Activated naive CD4-positive, alpha-beta T cell treated with anti-CD3 and anti-CD28 coated beads for 36 hours (primary cell): ENCODE measurements at regions of chr21 and their contacts with region 1.

Region 1: GRCh38 chr21:14454016-14455009 is 71.4 kb upstream of the HSPA13 start:
- DNase-seq: no peak
- H3K4me3 Mint-ChIP-seq: no peak overlapping the region
- H3K27ac Mint-ChIP-seq: peak overlapping the region; percentile 88
- H3K4me1 Mint-ChIP-seq: peaks cover 48% of the 10 kb centered on the region
- H3K27me3 Mint-ChIP-seq: peaks cover 2% of the 10 kb centered on the region

Region 2: DNA sequence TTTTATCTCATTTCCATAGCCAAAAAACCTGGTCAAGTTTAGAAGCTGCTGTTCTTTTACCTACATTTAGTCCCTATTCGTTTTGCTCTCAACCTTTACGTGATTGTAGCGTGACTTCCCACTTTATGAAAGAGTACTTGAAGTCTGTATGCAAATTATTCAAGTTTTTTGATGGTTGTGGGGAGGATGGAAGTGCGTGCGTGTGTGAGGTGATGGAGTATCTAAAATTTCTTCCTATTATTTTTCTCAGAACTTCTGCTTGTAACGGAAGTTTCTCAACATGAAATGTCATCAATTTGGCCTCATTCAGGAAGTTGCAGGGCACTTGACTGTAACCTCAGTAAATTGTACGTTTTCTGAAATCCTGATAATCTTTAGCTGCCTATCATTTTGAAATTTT is 27.9 kb after region 1 on chr21:
- CTCF ChIA-PET with region 1: interaction called, 4 read pairs
- intact Hi-C with region 1: loop called (anchors 1 kb)
- DNase-seq: peak; percentile 55
- H3K4me3 Mint-ChIP-seq: peak overlapping the region; percentile 1
- H3K27ac Mint-ChIP-seq: peak overlapping the region; percentile 90
- H3K4me1 Mint-ChIP-seq: peaks cover 61% of the 10 kb centered on the region
- H3K27me3 Mint-ChIP-seq: no peaks in the 10 kb centered on the region

Region 3: DNA sequence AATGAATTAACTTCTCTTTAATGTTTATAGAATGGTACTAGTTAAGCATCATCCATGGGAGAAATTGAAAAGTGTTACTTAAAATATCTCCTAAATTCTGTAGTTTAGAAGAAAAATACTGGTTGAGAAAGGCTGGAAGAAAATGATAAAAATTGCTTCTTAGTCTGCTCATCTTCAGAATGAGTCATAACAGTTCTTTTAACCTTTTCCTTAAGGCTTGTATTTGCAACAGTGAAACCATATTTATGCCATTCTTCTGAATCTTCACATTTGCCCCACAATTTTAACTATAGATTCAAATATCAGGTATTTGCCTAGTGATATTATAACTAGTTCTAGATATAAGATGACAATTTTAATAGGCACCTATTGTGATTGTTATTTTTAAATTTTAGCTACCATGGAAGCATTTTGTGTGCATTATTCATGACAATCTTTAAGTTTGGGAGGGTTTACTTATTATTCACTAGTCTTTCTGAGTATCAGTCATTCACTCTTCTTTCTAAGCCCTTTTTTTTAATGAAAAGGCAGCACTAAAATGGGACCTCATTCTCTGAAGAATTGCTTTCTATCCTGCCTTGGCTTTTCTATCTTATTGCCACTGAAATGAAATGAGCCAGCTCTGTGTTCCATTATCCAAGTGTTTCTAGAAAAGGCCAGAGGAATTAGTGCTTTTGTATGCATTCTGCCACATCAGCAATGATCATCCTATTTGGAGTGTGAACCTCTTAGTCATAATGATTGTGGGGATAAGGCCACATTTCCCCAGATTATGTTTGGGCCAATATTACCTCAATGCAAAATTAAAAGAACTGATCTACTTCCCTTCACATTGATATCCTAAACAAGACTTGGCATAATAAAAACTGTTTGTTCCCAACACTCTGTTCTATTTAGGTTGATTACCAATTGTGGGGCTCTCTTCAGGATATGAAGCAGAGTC is 33.4 kb after region 1 on chr21:
- CTCF ChIA-PET with region 1: interaction called, 3 read pairs
- intact Hi-C with region 1: loop called (anchors 1 kb)
- DNase-seq: no peak
- H3K4me3 Mint-ChIP-seq: no peak overlapping the region
- H3K27ac Mint-ChIP-seq: peak overlapping the region; percentile 81
- H3K4me1 Mint-ChIP-seq: peaks cover 51% of the 10 kb centered on the region
- H3K27me3 Mint-ChIP-seq: no peaks in the 10 kb centered on the region

Region 4: DNA sequence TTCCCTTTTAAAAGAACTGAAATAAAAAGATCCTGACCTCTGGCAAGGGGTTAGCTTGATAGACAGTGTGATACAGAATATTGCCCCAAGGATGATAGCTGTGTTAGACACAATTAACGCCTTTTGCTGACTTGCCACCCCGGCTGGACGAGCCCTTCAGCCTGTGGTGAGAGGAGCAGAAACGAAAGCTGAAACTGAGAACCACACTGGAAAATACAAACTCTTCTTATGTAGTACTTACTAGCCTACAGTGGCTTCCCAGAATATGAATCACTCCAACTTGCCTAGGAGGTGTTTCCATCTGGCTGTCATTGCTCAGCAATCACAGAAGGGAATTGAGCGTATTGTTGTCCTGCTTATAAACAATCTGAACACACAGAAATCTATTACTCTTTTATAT is 68.9 kb after region 1 on chr21:
- CTCF ChIA-PET with region 1: interaction called, 3 read pairs
- intact Hi-C with region 1: loop called (anchors 1 kb)
- DNase-seq: peak; percentile 51
- H3K4me3 Mint-ChIP-seq: peak overlapping the region; percentile 55
- H3K27ac Mint-ChIP-seq: peak overlapping the region; percentile 68
- H3K4me1 Mint-ChIP-seq: peaks cover 53% of the 10 kb centered on the region
- H3K27me3 Mint-ChIP-seq: no peaks in the 10 kb centered on the region

Region 5: DNA sequence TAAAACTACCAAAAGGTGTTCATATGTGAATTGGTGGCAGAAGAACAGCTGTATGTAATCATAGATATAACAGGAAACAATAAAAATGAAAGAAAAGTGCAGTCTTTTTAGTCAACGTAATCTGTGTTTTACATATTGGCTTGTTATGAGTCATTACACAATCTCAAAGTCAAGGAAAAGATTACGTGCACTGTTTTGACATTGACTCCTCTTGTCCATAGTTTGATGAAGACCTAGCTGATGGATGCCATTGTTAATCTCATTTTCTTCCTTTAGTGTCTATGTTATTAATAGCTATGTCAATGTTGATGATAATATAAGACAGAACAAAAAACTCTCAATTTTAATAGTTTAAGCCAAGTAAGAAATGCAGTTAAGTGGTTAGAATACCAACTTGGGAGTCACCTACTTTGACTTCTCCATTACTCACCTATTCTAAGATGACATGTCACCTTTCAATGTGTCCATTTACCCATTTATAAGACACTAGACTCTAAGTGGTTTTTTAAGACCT is 176.3 kb after region 1 on chr21:
- CTCF ChIA-PET with region 1: no interaction called
- intact Hi-C with region 1: loop called (anchors 1 kb)
- DNase-seq: no peak
- H3K4me3 Mint-ChIP-seq: no peak overlapping the region
- H3K27ac Mint-ChIP-seq: peak overlapping the region; percentile 65
- H3K4me1 Mint-ChIP-seq: peaks cover 19% of the 10 kb centered on the region
- H3K27me3 Mint-ChIP-seq: no peaks in the 10 kb centered on the region

Region 6: DNA sequence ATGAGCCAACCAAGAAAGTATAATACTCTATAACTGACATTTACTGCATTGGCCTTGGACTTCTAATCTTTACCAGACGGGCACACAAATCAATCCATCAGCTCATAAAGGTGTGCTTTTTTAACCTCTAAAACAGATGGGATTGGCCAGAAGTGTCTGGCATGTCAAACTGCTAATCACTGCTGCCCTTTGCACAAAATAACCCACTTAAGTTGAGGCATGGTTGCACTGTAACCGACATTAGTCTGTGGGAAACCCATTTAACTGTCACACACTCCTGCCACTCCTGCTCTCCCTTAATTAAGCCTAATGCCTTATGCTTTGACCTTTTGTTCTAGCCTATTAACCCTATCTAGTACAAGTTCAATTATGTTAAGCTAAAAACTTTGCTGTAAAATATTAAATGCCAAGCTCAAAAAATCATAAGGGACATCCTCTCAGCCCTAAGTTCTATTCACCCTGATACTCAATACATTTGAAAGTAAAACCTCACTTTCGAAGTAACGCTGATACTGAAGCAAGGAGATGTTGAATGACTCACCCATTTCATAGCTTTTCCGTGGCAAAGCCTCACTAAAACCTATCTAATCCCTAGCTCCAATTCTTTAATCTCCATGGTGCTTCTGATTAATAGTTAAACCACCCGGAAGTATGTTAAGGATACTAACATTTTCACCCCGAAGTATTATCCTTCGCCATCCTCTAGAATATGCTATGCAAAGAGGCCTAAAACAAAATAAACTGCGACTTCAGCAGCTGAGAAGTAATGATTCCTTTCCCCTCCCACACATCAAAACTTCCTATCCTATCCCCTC is 597.5 kb after region 1 on chr21:
- CTCF ChIA-PET with region 1: no interaction called
- intact Hi-C with region 1: loop called (anchors 1 kb)
- DNase-seq: no peak
- H3K4me3 Mint-ChIP-seq: peak overlapping the region; percentile 69
- H3K27ac Mint-ChIP-seq: peak overlapping the region; percentile 63
- H3K4me1 Mint-ChIP-seq: peaks cover 77% of the 10 kb centered on the region
- H3K27me3 Mint-ChIP-seq: no peaks in the 10 kb centered on the region